IMR-90 (cell line): ENCODE measurements at regions of chr6 and their contacts with region 1.

Region 1: GRCh38 chr6:20826378-20826777 is 292.1 kb downstream of the CDKAL1 start:
- DNase-seq: peak; percentile 78
- ATAC-seq: peak; percentile 82
- H3K4me3 ChIP-seq: no peak overlapping the region
- H3K27ac ChIP-seq: no peak overlapping the region
- H3K4me1 ChIP-seq: peaks cover 4% of the 10 kb centered on the region
- H3K27me3 ChIP-seq: no peaks in the 10 kb centered on the region
- CTCF ChIP-seq: no peak
- POLR2A ChIP-seq: no peak
- RAD21 ChIP-seq: no peak

Region 2: DNA sequence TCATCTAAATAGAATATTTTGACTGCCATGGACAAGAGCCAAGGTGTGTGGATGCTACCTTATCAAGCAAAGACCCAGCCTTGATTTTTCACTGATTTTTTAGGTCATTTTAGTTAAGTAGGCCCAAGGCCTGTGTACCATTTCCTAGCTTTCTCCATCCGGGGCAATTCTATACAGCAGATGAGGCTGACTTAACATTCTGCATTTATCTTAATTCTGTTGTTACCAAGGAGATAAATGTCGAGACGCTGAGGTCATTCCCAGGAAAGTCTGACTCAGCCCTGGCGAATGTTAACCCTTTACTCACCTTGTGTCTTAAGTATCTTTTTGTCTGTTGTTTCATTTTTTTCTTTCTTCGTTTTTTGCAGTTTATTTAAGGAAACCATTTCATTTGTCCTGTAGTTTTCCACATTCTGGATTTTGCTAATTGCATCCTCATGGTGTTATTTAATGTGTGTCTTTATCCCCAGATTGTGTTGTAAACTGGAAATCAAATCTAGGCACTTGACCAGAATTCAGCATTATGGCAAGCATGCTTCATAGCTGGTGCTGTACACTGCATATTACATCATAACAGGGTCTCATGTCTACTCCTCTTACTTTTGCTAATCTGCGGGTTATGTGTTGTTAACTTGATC is 15.2 kb before region 1 on chr6:
- CTCF ChIA-PET with region 1: no interaction called
- POLR2A ChIA-PET with region 1: interaction called, 18 read pairs
- dilution Hi-C with region 1: no loop called
- in situ Hi-C with region 1: no loop called
- intact Hi-C with region 1: no loop called
- DNase-seq: peak; percentile 99
- ATAC-seq: peak; percentile 92
- H3K4me3 ChIP-seq: no peak overlapping the region
- H3K27ac ChIP-seq: peak overlapping the region; percentile 87; the same call in 1 of the 2 replicates
- H3K4me1 ChIP-seq: peaks cover 6% of the 10 kb centered on the region
- H3K27me3 ChIP-seq: no peaks in the 10 kb centered on the region
- CTCF ChIP-seq: no peak
- POLR2A ChIP-seq: no peak
- RAD21 ChIP-seq: no peak